BJ (cell line): ENCODE measurements at regions of chr4 and their contacts with region 1.

Region 1: GRCh38 chr4:177381762-177382290 is 60.4 kb downstream of the AGA start:
- DNase-seq: no peak
- H3K4me3 ChIP-seq: no peak overlapping the region
- H3K27me3 ChIP-seq: no peaks in the 10 kb centered on the region
- CTCF ChIP-seq: no peak

Region 2: GRCh38 chr4:177263818-177264217 is 118.0 kb before region 1 on chr4:
- CTCF ChIA-PET with region 1: no interaction called
- POLR2A ChIA-PET with region 1: no interaction called
- DNase-seq: no peak
- H3K4me3 ChIP-seq: no peak overlapping the region
- H3K27me3 ChIP-seq: 0 out of 2 replicates have a peak, but pooled peaks cover 1% of the 10 kb centered on the region
- CTCF ChIP-seq: no peak

Region 3: GRCh38 chr4:177441803-177442622 is 60.2 kb after region 1 on chr4 and contains the start of gene AGA:
- CTCF ChIA-PET with region 1: interaction called, 3 read pairs
- POLR2A ChIA-PET with region 1: interaction called, 13 read pairs
- DNase-seq: peak; percentile 68
- H3K4me3 ChIP-seq: peak within 1 kb of the TSS; percentile 76
- H3K27me3 ChIP-seq: no peaks in the 10 kb centered on the region
- CTCF ChIP-seq: no peak
- polyA plus RNA-seq, gene AGA: 102 and 120 TPM in 2 replicates